Left cardiac atrium (tissue), 4 donors: ENCODE measurements at regions of chr6 and their contacts with region 1.

Region 1: DNA sequence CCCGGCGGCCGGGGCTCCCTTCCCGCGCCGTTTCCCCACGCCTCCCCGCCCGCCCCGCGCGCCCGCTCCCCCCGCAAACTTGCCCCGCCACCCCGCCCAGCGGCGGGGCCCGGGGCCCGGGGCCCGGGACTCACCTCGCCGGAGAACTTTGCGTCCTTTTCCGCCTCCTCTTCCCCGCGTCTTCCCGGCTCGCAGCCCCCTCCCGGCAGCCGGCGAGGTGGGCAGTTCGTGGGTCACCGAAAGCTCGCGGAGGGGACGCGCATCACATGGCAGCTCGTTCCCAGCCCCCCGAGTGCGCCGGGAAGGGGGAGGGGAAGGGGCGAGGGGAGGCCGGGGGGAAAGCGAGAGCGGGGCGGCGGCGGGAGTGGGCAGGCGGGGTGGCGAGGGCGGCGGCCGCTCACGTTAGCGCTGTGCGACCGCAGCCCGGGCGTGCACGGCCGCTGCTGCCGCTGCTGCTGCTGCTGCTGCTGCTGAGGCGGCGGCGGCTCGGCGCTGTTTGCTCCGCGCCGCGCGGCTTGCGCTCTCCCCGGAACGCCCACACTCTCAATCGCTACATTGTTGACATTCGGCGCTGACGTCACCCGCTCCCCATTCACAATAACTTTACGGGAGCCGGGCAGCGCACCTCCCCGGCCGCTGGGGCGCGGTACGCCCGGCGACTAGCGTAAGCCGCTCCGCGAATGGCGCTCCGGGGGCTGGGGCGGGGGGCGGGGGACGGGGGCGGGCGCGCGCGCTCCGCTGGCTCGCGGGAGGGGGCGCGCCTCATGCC is at the start of gene BACH2:
- DNase-seq: peak; percentile 94
- ATAC-seq: peak; percentile 72 to 76
- total RNA-seq, gene BACH2: 2.0 to 2.5 TPM

Region 2: GRCh38 chr6:90383196-90383822 is 86.8 kb after region 1 on chr6:
- intact Hi-C with region 1: loop called in 1 of 2 experiments (anchors 10 kb)
- DNase-seq: no peak
- ATAC-seq: no peak